CD8-positive, alpha-beta T cell (primary cell): ENCODE measurements at regions of chr9 and their contacts with region 1.

Region 1: DNA sequence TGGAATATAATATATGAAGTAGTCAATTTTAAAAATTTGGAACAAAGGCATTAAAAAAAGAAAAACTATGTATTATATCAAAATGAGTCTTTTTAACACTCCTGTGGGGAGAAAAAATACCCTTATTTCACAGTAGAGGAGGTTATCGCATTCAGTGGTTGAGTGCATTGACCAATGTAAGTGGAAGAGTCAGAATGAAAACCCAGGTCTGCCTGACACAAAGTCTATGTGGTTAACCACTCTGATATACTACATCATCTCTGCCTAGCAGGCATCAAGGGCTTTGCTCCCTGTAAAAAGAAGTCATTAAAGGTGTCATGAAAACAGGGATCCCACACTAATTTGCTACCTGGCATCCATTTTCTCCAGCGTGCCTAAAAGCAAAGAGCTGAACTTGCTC is 417.2 kb upstream of the C9orf72 start:
- DNase-seq: no peak
- ATAC-seq: no peak
- H3K4me3 ChIP-seq: no peak overlapping the region
- H3K4me3 Mint-ChIP-seq: no peak overlapping the region
- H3K27ac ChIP-seq: no peak overlapping the region
- H3K27ac Mint-ChIP-seq: no peak overlapping the region
- H3K4me1 ChIP-seq: no peaks in the 10 kb centered on the region
- H3K4me1 Mint-ChIP-seq: no peaks in the 10 kb centered on the region
- H3K27me3 ChIP-seq: no peaks in the 10 kb centered on the region
- H3K27me3 Mint-ChIP-seq: no peaks in the 10 kb centered on the region
- CTCF ChIP-seq: no peak

Region 2: GRCh38 chr9:27977931-27978330 is 12.6 kb before region 1 on chr9:
- CTCF ChIA-PET with region 1: no interaction called
- POLR2A ChIA-PET with region 1: no interaction called
- intact Hi-C with region 1: loop called in 1 of 2 experiments (anchors 2 kb)
- DNase-seq: no peak
- ATAC-seq: no peak
- H3K4me3 ChIP-seq: no peak overlapping the region
- H3K4me3 Mint-ChIP-seq: no peak overlapping the region
- H3K27ac ChIP-seq: no peak overlapping the region
- H3K27ac Mint-ChIP-seq: no peak overlapping the region
- H3K4me1 ChIP-seq: no peaks in the 10 kb centered on the region
- H3K4me1 Mint-ChIP-seq: no peaks in the 10 kb centered on the region
- H3K27me3 ChIP-seq: no peaks in the 10 kb centered on the region
- H3K27me3 Mint-ChIP-seq: no peaks in the 10 kb centered on the region
- CTCF ChIP-seq: no peak

Region 3: GRCh38 chr9:28032207-28032590 is 41.7 kb after region 1 on chr9:
- CTCF ChIA-PET with region 1: no interaction called
- POLR2A ChIA-PET with region 1: no interaction called
- intact Hi-C with region 1: loop called in 1 of 2 experiments (anchors 1 kb)
- DNase-seq: no peak
- ATAC-seq: no peak
- H3K4me3 ChIP-seq: no peak overlapping the region
- H3K4me3 Mint-ChIP-seq: no peak overlapping the region
- H3K27ac ChIP-seq: no peak overlapping the region
- H3K27ac Mint-ChIP-seq: no peak overlapping the region
- H3K4me1 ChIP-seq: no peaks in the 10 kb centered on the region
- H3K4me1 Mint-ChIP-seq: no peaks in the 10 kb centered on the region
- H3K27me3 ChIP-seq: no peaks in the 10 kb centered on the region
- H3K27me3 Mint-ChIP-seq: no peaks in the 10 kb centered on the region
- CTCF ChIP-seq: no peak